CD8-positive, alpha-beta memory T cell (primary cell): ENCODE measurements at regions of chr6 and their contacts with region 1.

Region 1: DNA sequence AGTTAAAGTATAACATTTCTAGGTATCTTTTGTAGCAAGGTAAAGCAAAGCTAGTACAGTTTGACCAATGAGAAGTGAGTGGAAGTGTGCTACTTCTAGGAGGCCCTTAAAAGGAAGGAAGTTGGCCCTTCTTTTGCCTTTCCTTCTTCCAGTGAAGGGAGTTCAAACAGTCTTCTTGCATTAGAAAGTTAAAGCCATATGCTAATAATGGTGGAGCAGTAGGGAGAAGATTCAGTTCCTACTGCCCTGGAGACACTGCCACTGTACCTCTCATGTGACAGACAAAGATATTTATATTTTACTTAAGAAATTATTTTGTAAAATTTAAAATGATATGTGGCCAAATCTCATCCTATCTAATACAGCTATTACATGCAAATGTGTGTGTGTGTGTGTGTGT is 26.0 kb upstream of the RCAN2 start:
- DNase-seq: no peak
- H3K4me3 ChIP-seq: no peak overlapping the region
- H3K4me3 Mint-ChIP-seq: no peak overlapping the region
- H3K27ac ChIP-seq: no peak overlapping the region
- H3K27ac Mint-ChIP-seq: no peak overlapping the region
- H3K4me1 ChIP-seq: no peaks in the 10 kb centered on the region
- H3K4me1 Mint-ChIP-seq: no peaks in the 10 kb centered on the region
- H3K27me3 ChIP-seq: no peaks in the 10 kb centered on the region
- H3K27me3 Mint-ChIP-seq: peaks cover 4 to 7% of the 10 kb centered on the region in 2 donors

Region 2: GRCh38 chr6:46098678-46099077 is 418.5 kb before region 1 on chr6:
- CTCF ChIA-PET with region 1: no interaction called
- POLR2A ChIA-PET with region 1: interaction called, 13 read pairs
- DNase-seq: no peak
- H3K4me3 ChIP-seq: no peak overlapping the region
- H3K4me3 Mint-ChIP-seq: no peak overlapping the region
- H3K27ac ChIP-seq: no peak overlapping the region
- H3K27ac Mint-ChIP-seq: no peak overlapping the region
- H3K4me1 ChIP-seq: no peaks in the 10 kb centered on the region
- H3K4me1 Mint-ChIP-seq: peaks cover 4 to 6% (median 5%) of the 10 kb centered on the region in 3 donors
- H3K27me3 ChIP-seq: no peaks in the 10 kb centered on the region
- H3K27me3 Mint-ChIP-seq: no peaks in the 10 kb centered on the region

Region 3: GRCh38 chr6:46555129-46555528 is 37.9 kb after region 1 on chr6:
- CTCF ChIA-PET with region 1: no interaction called
- POLR2A ChIA-PET with region 1: no interaction called
- DNase-seq: no peak
- H3K4me3 ChIP-seq: no peak overlapping the region
- H3K4me3 Mint-ChIP-seq: no peak overlapping the region
- H3K27ac ChIP-seq: no peak overlapping the region
- H3K27ac Mint-ChIP-seq: no peak overlapping the region
- H3K4me1 ChIP-seq: no peaks in the 10 kb centered on the region
- H3K4me1 Mint-ChIP-seq: no peaks in the 10 kb centered on the region
- H3K27me3 ChIP-seq: no peaks in the 10 kb centered on the region
- H3K27me3 Mint-ChIP-seq: peaks cover 11 to 47% of the 10 kb centered on the region in 2 donors